GM12878 (cell line): ENCODE measurements at regions of chr20 and their contacts with region 1.

Region 1: GRCh38 chr20:32521780-32522525 is 63.2 kb downstream of the NOL4L start:
- DNase-seq: no peak
- ATAC-seq: peak; percentile 87
- H3K4me3 ChIP-seq: no peak overlapping the region
- H3K27ac ChIP-seq: no peak overlapping the region
- H3K4me1 ChIP-seq: peaks cover 20% of the 10 kb centered on the region
- H3K27me3 ChIP-seq: no peaks in the 10 kb centered on the region
- CTCF ChIP-seq: peak; percentile 83 to 93 (median 83)
- EP300 ChIP-seq: no peak
- POLR2A ChIP-seq: no peak
- RAD21 ChIP-seq: peak; percentile 97

Region 2: DNA sequence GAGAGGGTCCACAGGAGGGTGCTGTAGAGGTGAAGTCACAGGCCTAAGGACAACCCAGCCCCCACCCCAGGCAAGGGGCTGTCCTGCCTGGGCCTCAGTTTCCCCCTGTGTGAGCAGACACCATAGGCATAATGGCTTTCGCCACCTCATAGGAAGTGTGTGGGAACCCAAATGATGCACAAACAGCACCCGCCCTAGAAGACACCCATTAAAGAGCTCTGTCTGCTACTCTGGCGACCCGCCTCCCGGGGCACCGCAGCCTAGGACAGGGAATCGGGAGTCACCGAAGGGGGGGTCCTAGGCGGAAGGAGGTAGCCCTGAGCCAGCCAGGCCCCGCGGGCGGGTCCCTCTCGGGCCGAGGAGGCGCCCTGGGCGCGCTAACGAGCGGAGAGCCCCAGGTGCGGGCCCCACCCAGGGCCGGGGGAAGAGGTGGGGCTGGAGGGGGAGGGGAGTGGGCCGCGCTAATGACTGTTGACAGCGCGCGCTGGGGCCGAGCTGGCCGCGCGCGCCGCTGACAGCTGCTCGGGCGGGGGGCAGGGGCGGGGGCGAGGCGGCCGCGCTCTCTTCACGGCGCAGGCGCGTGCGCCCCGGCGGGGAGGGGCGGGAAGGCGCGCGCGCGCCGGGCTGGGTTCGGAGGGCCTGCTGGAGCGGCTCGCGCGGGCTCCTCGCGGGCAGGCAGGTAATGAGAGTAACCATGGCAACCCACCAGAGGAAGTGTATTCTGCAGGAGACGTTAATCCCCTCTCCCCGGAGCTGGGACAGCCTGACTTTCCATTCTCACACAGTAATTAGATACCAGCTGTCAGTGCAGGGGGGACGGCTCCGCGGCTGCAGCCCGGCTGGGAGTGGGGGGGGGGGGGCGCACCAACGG is 14.2 kb after region 1 on chr20:
- CTCF ChIA-PET with region 1: interaction called, 81 read pairs
- POLR2A ChIA-PET with region 1: interaction called, 27 read pairs
- RAD21 ChIA-PET with region 1: interaction called, 85 read pairs
- SMC1A ChIA-PET with region 1: interaction called, 107 read pairs
- in situ Hi-C with region 1: no loop called
- intact Hi-C with region 1: no loop called
- DNase-seq: no peak
- ATAC-seq: peak; percentile 76
- H3K4me3 ChIP-seq: peak overlapping the region; percentile 61
- H3K27ac ChIP-seq: peak overlapping the region; percentile 64
- H3K4me1 ChIP-seq: peaks cover 46% of the 10 kb centered on the region
- H3K27me3 ChIP-seq: no peaks in the 10 kb centered on the region
- CTCF ChIP-seq: no peak
- EP300 ChIP-seq: no peak
- POLR2A ChIP-seq: peak; percentile 45; the same call in 1 of the 2 replicates
- RAD21 ChIP-seq: no peak

Region 3: DNA sequence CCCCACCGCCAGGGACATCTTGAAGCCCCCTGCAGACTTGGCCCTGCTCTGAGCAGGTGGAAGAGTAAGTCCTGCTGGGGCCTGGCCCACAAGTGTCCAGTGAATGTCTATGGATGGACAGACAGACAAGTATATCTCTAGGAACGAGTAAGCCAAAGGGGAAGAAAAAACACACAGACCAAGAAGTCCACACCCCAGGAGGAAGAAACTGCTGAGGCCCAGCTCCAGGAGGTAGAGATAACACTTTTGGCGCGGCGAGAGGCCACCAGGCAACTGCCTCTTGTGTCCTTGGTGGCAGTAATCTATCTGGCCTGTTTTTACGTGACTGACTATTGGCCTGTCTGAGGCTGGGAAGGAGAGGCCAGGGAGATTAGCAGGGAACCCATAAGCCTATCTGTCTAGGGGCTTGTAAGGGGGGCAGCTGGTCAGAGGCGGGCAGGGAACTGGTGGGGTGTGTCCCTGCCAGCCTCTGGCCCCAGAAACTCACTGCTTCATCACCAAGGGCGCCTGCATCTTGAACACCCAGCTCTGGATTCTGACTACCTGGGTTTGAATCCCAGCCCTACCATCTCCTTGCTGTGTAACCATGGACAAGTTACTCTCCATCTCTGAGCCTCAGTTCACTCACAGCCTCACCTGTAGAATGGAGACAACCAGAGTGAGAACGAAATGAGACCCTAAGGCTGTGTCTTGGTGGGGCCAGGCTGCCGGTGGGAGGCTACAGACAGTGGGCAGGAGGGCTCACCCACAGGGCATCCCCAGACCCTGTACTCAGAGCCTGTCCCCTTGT is 120.5 kb after region 1 on chr20:
- CTCF ChIA-PET with region 1: interaction called, 29 read pairs
- POLR2A ChIA-PET with region 1: no interaction called
- RAD21 ChIA-PET with region 1: interaction called, 186 read pairs
- SMC1A ChIA-PET with region 1: interaction called, 248 read pairs
- in situ Hi-C with region 1: no loop called
- intact Hi-C with region 1: no loop called
- DNase-seq: no peak
- ATAC-seq: no peak
- H3K4me3 ChIP-seq: no peak overlapping the region
- H3K27ac ChIP-seq: no peak overlapping the region
- H3K4me1 ChIP-seq: no peaks in the 10 kb centered on the region
- H3K27me3 ChIP-seq: no peaks in the 10 kb centered on the region
- CTCF ChIP-seq: no peak
- EP300 ChIP-seq: no peak
- POLR2A ChIP-seq: no peak
- RAD21 ChIP-seq: no peak

Region 4: DNA sequence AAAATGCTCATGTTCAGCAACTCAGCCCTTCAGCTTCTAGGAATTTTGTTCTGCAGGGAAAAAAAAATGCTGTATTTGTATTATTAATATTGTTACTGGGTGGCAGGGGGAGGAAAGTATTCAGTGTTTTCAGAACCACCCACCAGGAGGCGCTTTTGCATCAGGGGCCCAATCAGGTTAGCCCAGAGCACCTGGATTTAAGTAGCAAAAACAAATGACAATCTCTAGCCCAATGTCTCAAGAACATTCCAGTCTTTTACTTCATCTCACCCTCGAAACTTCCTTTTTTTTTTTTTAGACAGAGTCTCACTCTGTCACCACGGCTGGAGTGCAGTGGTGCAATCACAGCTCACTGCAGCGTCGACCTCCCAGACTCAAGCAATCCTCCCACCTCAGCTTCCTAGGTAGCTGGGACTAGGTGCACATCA is 152.4 kb after region 1 on chr20:
- CTCF ChIA-PET with region 1: interaction called, 24 read pairs
- POLR2A ChIA-PET with region 1: interaction called, 3 read pairs
- RAD21 ChIA-PET with region 1: interaction called, 4 read pairs
- SMC1A ChIA-PET with region 1: interaction called, 9 read pairs
- in situ Hi-C with region 1: no loop called
- intact Hi-C with region 1: no loop called
- DNase-seq: no peak
- ATAC-seq: peak; percentile 69
- H3K4me3 ChIP-seq: no peak overlapping the region
- H3K27ac ChIP-seq: no peak overlapping the region
- H3K4me1 ChIP-seq: peaks cover 38% of the 10 kb centered on the region
- H3K27me3 ChIP-seq: no peaks in the 10 kb centered on the region
- CTCF ChIP-seq: peak; percentile 74 to 86 (median 85)
- EP300 ChIP-seq: no peak
- POLR2A ChIP-seq: no peak
- RAD21 ChIP-seq: peak; percentile 94

Region 5: DNA sequence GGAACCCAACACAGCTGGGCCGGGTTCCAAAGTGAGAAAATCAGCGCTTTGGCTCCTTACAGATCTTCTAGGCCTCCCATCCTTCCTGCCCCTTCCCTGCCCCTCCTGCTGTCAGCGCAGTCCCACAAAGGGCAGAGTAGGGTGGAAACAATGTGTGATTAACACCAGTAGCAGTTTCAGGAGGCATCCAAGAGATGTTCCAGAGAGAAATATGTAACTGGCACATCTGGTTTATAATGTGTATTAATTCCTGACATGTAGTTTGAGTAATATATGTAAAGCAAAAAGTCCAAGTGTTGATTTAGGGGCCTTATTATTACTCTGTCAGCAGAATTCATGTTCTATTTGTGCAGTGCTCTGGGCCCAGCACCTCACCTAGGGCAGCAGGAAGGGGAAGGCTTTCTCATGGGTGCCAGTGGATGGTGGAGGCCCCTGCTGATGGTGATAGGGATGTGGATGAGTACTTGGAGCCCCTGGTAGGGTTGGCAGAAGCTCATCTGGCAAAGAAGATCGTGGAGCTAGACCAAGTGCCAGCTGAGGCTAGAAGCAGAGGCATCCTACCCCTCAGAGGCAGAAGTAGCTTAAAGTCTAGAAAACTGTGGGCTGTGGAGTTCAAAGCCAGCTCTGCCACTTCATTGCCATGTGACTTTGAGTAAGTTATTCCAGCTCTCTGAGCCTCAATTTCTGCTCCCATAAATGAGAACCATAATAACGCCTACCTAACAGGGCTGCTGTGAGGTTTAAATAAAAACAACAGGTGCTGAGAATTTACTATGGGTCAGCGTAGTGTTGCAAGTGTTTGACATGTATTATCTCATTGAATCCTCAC is 1449.4 kb after region 1 on chr20:
- CTCF ChIA-PET with region 1: no interaction called
- POLR2A ChIA-PET with region 1: no interaction called
- RAD21 ChIA-PET with region 1: no interaction called
- SMC1A ChIA-PET with region 1: no interaction called
- in situ Hi-C with region 1: no loop called
- intact Hi-C with region 1: no loop called
- DNase-seq: no peak
- ATAC-seq: no peak
- H3K4me3 ChIP-seq: no peak overlapping the region
- H3K27ac ChIP-seq: no peak overlapping the region
- H3K4me1 ChIP-seq: no peaks in the 10 kb centered on the region
- H3K27me3 ChIP-seq: 0 out of 4 replicates have a peak, but pooled peaks cover 0 to under 1% of the 10 kb centered on the region in 2 experiments
- CTCF ChIP-seq: no peak
- EP300 ChIP-seq: no peak
- POLR2A ChIP-seq: no peak
- RAD21 ChIP-seq: no peak